ENCODE measurements at regions of chr2 and their contacts with region 1.

Region 1: DNA sequence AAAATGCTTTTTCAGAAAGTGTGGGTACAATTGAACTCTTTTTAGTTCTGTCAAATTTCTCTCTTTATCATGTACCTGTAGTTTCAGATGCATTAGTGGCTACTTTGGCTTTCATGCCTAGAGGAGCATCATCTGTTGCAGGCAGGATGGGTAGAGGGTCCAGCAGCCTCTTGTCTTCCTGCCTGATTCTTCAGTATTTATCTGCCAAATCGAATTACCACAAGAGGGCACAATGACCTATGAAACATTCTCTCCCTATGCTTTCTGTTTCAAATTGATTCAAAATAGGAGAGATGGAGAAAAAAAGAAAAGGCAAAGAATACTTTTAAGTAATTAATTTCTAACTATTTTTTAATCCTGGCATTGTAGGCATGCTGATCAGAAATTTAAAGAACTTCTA is 477.2 kb downstream of the TRIB2 start:
- DNase-seq: peak; percentile 10
- H3K4me3 Mint-ChIP-seq: no peak overlapping the region
- H3K27ac Mint-ChIP-seq: no peak overlapping the region
- H3K4me1 Mint-ChIP-seq: no peaks in the 10 kb centered on the region
- H3K27me3 Mint-ChIP-seq: no peaks in the 10 kb centered on the region
- CTCF ChIP-seq: peak; percentile 33

Region 2: GRCh38 chr2:13050764-13051163 is 143.1 kb before region 1 on chr2:
- CTCF ChIA-PET with region 1: no interaction called
- intact Hi-C with region 1: loop called (anchors 5 kb)
- DNase-seq: no peak
- H3K4me3 Mint-ChIP-seq: no peak overlapping the region
- H3K27ac Mint-ChIP-seq: peak overlapping the region; percentile 90
- H3K4me1 Mint-ChIP-seq: peaks cover 8% of the 10 kb centered on the region
- H3K27me3 Mint-ChIP-seq: no peaks in the 10 kb centered on the region
- CTCF ChIP-seq: no peak

Region 3: GRCh38 chr2:13114391-13114790 is 79.5 kb before region 1 on chr2:
- CTCF ChIA-PET with region 1: no interaction called
- intact Hi-C with region 1: no loop called
- DNase-seq: peak; percentile 8
- H3K4me3 Mint-ChIP-seq: no peak overlapping the region
- H3K27ac Mint-ChIP-seq: no peak overlapping the region
- H3K4me1 Mint-ChIP-seq: peaks cover 9% of the 10 kb centered on the region
- H3K27me3 Mint-ChIP-seq: no peaks in the 10 kb centered on the region
- CTCF ChIP-seq: no peak

Region 4: GRCh38 chr2:13413989-13414388 is 220.1 kb after region 1 on chr2:
- CTCF ChIA-PET with region 1: no interaction called
- intact Hi-C with region 1: loop called (anchors 2 kb)
- DNase-seq: no peak
- H3K4me3 Mint-ChIP-seq: no peak overlapping the region
- H3K27ac Mint-ChIP-seq: no peak overlapping the region
- H3K4me1 Mint-ChIP-seq: no peaks in the 10 kb centered on the region
- H3K27me3 Mint-ChIP-seq: no peaks in the 10 kb centered on the region
- CTCF ChIP-seq: no peak

Region 5: DNA sequence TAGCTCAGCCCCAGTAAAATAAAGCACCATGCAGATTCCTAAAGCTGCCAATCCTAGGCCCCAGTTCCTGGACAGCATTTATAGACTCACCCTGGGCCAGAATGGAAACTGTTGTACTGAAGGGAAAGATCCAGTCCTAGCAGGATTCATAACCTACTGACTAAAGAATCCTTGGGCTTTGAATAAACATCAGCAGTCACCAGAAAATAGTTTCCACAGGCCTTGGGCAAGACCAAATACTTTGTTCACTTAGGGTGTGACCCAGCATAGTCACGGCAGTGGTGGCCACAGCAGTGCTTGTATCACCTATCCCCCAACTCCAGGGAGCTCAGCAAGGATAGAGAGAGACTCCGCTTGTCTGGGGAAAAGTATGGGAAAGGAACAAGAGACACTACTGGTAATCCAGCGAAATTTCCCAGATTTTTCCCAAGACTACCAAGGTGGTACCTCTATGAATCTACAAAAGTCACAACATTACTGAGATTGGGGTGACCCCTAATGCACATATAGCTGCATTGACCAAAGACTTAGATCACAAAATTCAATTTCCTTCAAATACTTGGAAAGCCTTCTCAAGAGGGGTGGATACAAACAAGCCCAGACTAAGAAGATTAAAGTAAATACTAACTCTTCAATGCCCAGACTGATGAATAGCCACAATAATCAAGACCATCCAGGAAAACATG is 690.5 kb after region 1 on chr2:
- CTCF ChIA-PET with region 1: no interaction called
- intact Hi-C with region 1: loop called (anchors 2 kb)
- DNase-seq: no peak
- H3K4me3 Mint-ChIP-seq: no peak overlapping the region
- H3K27ac Mint-ChIP-seq: no peak overlapping the region
- H3K4me1 Mint-ChIP-seq: no peaks in the 10 kb centered on the region
- H3K27me3 Mint-ChIP-seq: no peaks in the 10 kb centered on the region
- CTCF ChIP-seq: no peak